ENCODE measurements at regions of chr5 and their contacts with region 1.

Region 1: GRCh38 chr5:103475629-103476240 is 86.9 kb downstream of the NUDT12 start:
- H3K4me3 Mint-ChIP-seq: no peak overlapping the region
- H3K27ac Mint-ChIP-seq: no peak overlapping the region
- H3K4me1 Mint-ChIP-seq: no peaks in the 10 kb centered on the region
- H3K27me3 Mint-ChIP-seq: no peaks in the 10 kb centered on the region

Region 2: GRCh38 chr5:103232393-103232999 is 243.2 kb before region 1 on chr5:
- intact Hi-C with region 1: loop called (anchors 1 kb)
- H3K4me3 Mint-ChIP-seq: no peak overlapping the region
- H3K27ac Mint-ChIP-seq: no peak overlapping the region
- H3K4me1 Mint-ChIP-seq: peaks cover 8% of the 10 kb centered on the region
- H3K27me3 Mint-ChIP-seq: no peaks in the 10 kb centered on the region

Region 3: DNA sequence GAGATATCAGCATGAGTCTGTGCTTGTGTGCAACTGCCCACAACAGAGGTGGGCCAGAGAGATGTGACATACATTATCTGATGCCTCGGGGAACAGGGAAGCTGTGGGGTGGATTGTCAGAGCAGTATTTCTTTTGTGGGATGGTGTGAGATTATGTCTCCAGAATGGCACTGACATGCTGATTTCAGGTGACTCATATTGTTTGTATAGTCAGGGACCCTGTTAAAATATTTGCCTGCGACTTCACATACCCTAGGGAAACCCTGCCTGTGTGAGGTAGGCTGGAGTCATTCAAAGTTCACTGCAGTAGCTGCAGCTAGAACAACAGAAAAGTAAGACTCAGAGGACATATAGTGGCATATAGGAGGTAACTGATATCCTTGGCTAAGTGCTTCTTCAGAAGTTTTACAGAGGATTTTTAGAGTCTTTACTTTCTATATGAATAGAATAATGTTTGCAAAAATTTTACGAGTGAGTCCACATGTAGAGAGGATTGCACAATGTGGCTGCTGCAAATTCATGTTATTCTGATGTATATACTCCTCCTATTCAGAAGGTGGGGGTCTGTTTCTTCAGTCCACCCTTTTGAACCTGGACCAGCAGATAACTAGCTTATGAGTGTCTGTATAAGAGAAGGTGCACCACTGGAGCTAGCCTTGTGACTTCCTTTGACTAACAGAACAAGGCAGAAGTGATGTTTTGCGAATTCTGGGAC is 127.9 kb before region 1 on chr5:
- intact Hi-C with region 1: no loop called
- H3K4me3 Mint-ChIP-seq: no peak overlapping the region
- H3K27ac Mint-ChIP-seq: no peak overlapping the region
- H3K4me1 Mint-ChIP-seq: no peaks in the 10 kb centered on the region
- H3K27me3 Mint-ChIP-seq: no peaks in the 10 kb centered on the region

Region 4: DNA sequence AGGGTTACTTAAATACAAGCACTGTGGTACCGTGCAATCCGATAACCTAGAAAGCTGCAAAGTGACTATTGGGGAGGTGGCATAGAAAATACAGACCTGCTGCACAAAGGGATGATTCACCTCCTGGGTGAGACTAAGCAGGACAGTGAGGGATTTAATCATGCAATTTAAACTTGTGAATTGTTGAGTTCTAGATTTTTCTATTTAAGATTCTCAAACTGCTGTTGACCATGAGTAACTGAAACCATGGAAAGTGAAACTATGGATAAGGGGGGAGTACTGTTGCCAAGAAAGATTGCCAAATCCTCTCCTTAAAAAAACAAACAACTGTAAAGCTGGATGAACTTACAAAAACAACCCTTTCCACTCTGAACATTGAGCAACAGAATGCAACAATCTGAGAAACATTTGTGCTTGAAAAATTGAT is 148.3 kb after region 1 on chr5:
- intact Hi-C with region 1: no loop called
- H3K4me3 Mint-ChIP-seq: no peak overlapping the region
- H3K27ac Mint-ChIP-seq: no peak overlapping the region
- H3K4me1 Mint-ChIP-seq: no peaks in the 10 kb centered on the region
- H3K27me3 Mint-ChIP-seq: no peaks in the 10 kb centered on the region

Measured in dendritic cell treated with granulocyte-macrophage colony-stimulating factor and Interleukin-4, amounts not matched to agents 40 ng/mL and 50 ng/mL, for 4 days (primary cell).